GM23248 (cell line): ENCODE measurements at regions of chr1 and their contacts with region 1.

Region 1: DNA sequence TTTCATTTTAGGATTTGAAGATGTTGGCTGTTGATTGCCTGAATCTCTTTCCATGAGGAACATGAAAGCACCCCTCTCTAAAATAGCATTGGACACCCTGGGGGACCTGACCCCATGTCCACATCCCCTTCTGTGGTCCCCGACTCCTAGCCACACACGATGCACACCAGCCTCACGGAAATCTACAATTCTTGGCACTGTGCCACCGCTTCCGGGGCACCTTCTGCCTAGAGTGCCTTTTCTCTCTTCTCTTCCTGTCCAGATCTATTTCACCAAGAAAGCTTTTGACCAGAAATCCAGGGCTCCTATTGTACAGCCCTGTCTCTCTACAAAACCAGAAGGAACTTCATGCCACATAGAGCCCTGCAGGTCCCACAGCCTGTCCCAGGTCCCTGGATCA is 50.3 kb downstream of the MYSM1 start:
- DNase-seq: no peak
- H3K4me3 ChIP-seq: no peak overlapping the region
- H3K27ac ChIP-seq: no peak overlapping the region
- H3K4me1 ChIP-seq: no peaks in the 10 kb centered on the region
- H3K27me3 ChIP-seq: no peaks in the 10 kb centered on the region

Region 2: DNA sequence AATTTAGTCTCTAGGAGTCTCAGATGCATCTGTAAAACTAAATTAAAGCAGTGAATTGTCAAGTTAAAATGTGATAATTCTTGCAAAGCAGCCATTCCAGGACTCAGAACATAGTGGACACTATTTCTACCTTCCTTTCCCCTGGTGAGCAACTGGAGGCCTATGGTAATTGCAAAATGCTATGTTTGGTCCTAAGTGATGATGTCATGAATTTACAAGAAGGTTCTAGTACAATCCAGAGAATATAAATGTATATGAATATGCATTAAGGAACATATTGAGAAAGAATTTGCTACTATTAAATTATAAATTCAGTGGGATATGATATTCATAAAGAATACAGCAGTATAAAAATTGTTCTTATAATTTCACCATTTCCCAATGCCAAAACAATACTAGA is 135.6 kb before region 1 on chr1:
- in situ Hi-C with region 1: loop called (anchors 5 kb)
- DNase-seq: no peak
- H3K4me3 ChIP-seq: no peak overlapping the region
- H3K27ac ChIP-seq: no peak overlapping the region
- H3K4me1 ChIP-seq: no peaks in the 10 kb centered on the region
- H3K27me3 ChIP-seq: no peaks in the 10 kb centered on the region

Region 3: GRCh38 chr1:58597076-58597475 is 52.5 kb before region 1 on chr1:
- in situ Hi-C with region 1: loop called (anchors 5 kb)
- DNase-seq: peak; percentile 61
- H3K4me3 ChIP-seq: no peak overlapping the region
- H3K27ac ChIP-seq: no peak overlapping the region
- H3K4me1 ChIP-seq: peaks cover 23% of the 10 kb centered on the region
- H3K27me3 ChIP-seq: no peaks in the 10 kb centered on the region